PC-9 (cell line): ENCODE measurements at regions of chr1 and their contacts with region 1.

Region 1: DNA sequence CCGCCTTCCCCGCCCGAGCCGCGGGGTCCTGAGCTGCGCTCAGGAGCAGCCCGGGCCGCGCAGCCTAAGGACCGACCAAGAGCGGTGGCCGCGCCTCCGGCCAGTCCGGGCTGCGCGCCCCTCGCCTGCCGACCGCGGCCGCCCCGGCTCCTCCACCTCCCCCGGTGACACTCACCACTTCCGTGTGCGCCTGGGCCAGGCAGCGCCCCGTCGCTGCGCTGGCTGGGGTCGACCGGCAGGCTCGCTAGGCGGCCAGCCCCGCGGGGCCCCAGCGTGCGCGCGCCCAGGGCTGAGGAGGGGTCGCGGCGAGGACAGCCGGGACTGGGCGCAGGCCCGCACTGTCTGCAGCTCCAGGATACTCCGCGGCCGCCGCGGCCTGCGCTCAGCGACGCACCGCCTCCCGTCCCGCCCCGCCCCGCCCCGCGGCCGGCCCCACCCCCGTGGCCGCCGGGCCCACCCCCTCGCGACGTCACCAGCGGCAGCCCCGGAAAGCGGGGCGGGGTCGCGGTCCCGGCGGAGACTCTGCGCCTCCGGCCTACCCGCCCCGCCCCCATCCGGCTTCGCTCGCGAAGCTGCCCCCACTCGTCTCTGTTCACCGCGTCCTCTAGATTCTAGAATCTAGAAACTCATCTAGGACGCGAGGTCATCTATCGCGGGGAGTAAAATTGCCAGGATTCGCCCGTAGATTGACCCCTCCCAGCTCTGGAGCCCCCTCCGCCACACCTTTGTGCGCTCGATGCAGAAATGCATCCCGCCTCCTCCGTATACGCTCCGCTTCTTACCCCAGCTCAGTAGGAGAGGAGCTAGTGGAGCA is at the start of gene JAK1:
- DNase-seq: peak; percentile 44 to 87
- H3K4me3 ChIP-seq: peak within 1 kb of the TSS; percentile 100
- H3K27ac ChIP-seq: peak within 1 kb of the TSS; percentile 73
- H3K4me1 ChIP-seq: peaks cover 19% of the 10 kb centered on the region
- H3K27me3 ChIP-seq: no peaks in the 10 kb centered on the region
- CTCF ChIP-seq: no peak
- total RNA-seq, gene JAK1: 88.5 and 97.9 TPM in 2 replicates

Region 2: GRCh38 chr1:64864018-64864940 is 102.1 kb before region 1 on chr1:
- CTCF ChIA-PET with region 1: interaction called, 5 read pairs
- POLR2A ChIA-PET with region 1: no interaction called
- intact Hi-C with region 1: loop called (anchors 5 kb)
- DNase-seq: peak in 1 of 2 experiments; percentile 84
- H3K4me3 ChIP-seq: no peak overlapping the region
- H3K27ac ChIP-seq: peak overlapping the region; percentile 59
- H3K4me1 ChIP-seq: peaks cover 6% of the 10 kb centered on the region; the same call in 1 of the 2 replicates
- H3K27me3 ChIP-seq: no peaks in the 10 kb centered on the region
- CTCF ChIP-seq: no peak

Region 3: GRCh38 chr1:64898107-64898845 is 68.1 kb before region 1 on chr1:
- CTCF ChIA-PET with region 1: no interaction called
- POLR2A ChIA-PET with region 1: interaction called, 7 read pairs
- intact Hi-C with region 1: loop called (anchors 1 kb)
- DNase-seq: peak; percentile 86 to 99
- H3K4me3 ChIP-seq: no peak overlapping the region; the same call in 1 of the 2 replicates
- H3K27ac ChIP-seq: peak overlapping the region; percentile 95
- H3K4me1 ChIP-seq: peaks cover 46% of the 10 kb centered on the region
- H3K27me3 ChIP-seq: no peaks in the 10 kb centered on the region
- CTCF ChIP-seq: no peak

Region 4: GRCh38 chr1:64917328-64917861 is 49.0 kb before region 1 on chr1:
- CTCF ChIA-PET with region 1: no interaction called
- POLR2A ChIA-PET with region 1: no interaction called
- intact Hi-C with region 1: loop called (anchors 2 kb)
- DNase-seq: peak; percentile 74 to 86
- H3K4me3 ChIP-seq: peak overlapping the region; percentile 4; the same call in 1 of the 2 replicates
- H3K27ac ChIP-seq: peak overlapping the region; percentile 49
- H3K4me1 ChIP-seq: peaks cover 56% of the 10 kb centered on the region
- H3K27me3 ChIP-seq: no peaks in the 10 kb centered on the region
- CTCF ChIP-seq: no peak

Region 5: GRCh38 chr1:64983150-64983549 is 16.8 kb after region 1 on chr1:
- CTCF ChIA-PET with region 1: no interaction called
- POLR2A ChIA-PET with region 1: no interaction called
- intact Hi-C with region 1: loop called (anchors 2 kb)
- DNase-seq: peak; percentile 81 to 94
- H3K4me3 ChIP-seq: no peak overlapping the region
- H3K27ac ChIP-seq: peak overlapping the region; percentile 38; the same call in 1 of the 2 replicates
- H3K4me1 ChIP-seq: peaks cover 39% of the 10 kb centered on the region
- H3K27me3 ChIP-seq: no peaks in the 10 kb centered on the region
- CTCF ChIP-seq: no peak

Region 6: DNA sequence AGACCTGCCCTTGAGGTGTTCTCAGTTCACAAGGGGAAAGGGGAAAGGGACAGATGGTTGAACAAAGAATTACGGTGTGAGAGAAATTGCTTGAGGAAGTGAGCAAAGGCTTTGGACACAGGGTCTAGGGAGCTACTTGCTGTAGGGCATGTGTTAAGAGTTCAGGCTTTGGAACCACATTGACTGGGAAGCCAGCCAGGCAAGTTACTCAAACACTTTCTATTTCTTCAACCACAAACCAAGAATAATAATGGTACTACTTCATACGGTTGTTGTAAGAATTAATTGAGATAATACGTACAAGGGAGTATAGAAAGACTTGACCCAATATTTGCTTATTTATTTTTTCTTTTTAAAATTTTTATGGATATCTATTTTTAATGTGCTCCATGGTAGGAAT is 208.2 kb after region 1 on chr1:
- CTCF ChIA-PET with region 1: no interaction called
- POLR2A ChIA-PET with region 1: interaction called, 6 read pairs
- intact Hi-C with region 1: loop called (anchors 10 kb)
- DNase-seq: peak; percentile 74 to 98
- H3K4me3 ChIP-seq: no peak overlapping the region
- H3K27ac ChIP-seq: peak overlapping the region; percentile 81
- H3K4me1 ChIP-seq: peaks cover 83% of the 10 kb centered on the region
- H3K27me3 ChIP-seq: no peaks in the 10 kb centered on the region
- CTCF ChIP-seq: no peak